ENCODE measurements at regions of chr10 and their contacts with region 1.

Region 1: GRCh38 chr10:29590915-29591650 is 43.7 kb downstream of the SVIL start:
- DNase-seq: no peak
- H3K4me3 Mint-ChIP-seq: peak overlapping the region; percentile 39
- H3K27ac Mint-ChIP-seq: peak overlapping the region; percentile 95
- H3K4me1 Mint-ChIP-seq: peaks cover 73% of the 10 kb centered on the region
- H3K27me3 Mint-ChIP-seq: no peaks in the 10 kb centered on the region
- CTCF ChIP-seq: no peak

Region 2: DNA sequence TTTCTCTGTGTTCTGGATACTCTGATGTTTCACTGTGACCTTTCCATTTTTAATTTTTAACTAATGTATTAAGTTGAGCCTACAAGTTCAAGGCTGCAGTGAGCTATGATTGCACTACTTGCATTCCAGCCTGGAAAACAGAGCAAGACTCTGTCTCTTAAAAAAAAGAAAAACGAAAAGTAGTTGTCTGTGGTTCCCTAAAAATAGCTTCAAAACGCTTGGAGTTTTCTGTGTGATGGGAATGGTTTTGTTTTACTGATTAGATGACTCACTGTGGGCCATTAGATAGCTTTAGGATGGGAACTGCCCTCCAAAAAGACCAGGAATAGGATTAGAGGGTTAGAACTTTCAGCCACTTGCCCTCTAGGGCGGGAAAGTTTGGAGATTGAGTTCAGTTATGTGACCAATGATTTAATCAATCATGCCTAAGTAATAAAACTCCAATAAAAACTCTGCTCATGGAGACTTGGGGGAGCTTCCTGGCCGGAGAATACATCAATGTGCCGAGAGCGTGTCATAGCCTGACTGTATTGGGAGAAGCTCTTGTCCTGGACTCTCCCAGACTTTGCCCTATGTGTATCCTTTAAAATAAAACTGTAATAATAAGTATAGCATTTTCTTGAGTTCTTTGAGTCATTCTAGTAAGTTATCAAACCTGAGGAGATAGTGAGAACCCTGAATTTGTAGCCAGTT is 155.1 kb before region 1 on chr10:
- CTCF ChIA-PET with region 1: no interaction called
- intact Hi-C with region 1: no loop called
- DNase-seq: no peak
- H3K4me3 Mint-ChIP-seq: no peak overlapping the region
- H3K27ac Mint-ChIP-seq: no peak overlapping the region
- H3K4me1 Mint-ChIP-seq: peaks cover 7% of the 10 kb centered on the region
- H3K27me3 Mint-ChIP-seq: no peaks in the 10 kb centered on the region
- CTCF ChIP-seq: no peak

Region 3: DNA sequence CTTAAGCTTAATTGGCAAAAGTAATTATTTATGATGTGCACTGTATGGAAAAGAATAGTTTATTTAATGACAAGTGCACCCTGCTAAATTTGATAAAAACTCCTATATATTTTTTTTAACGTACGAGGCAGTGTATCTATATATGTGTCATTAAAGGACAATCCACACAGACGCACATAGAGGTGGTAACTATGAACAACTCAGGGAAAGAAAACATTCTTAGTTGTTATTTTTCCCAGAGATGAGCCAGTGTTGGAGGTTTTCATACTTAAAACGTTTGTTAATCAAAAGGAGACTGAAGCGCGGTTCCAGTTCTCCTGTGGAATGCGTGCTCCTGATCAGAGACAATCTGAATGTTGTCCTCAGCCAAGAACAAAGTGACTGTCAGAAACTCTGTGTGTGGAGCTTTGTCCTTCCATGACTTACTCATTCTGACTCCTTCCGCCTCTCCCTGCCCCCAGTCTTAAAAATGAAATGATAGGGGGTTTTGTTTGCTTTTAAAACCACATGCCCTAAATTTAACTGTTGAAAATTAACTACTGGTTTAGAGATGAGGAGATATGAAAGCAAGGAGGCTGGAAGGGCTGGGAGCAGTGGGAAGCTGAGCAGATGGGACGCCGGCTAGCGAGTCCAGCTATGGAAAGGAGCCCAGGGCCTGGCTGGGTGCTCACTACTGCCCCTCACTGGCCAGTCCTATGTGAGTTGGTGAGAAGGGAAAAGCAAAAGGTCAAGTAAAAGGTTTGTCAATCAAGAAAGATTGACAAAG is 55.9 kb before region 1 on chr10:
- CTCF ChIA-PET with region 1: interaction called, 16 read pairs
- intact Hi-C with region 1: loop called (anchors 5 kb)
- DNase-seq: peak; percentile 93
- H3K4me3 Mint-ChIP-seq: peak overlapping the region; percentile 62
- H3K27ac Mint-ChIP-seq: peak overlapping the region; percentile 90
- H3K4me1 Mint-ChIP-seq: peaks cover 52% of the 10 kb centered on the region
- H3K27me3 Mint-ChIP-seq: no peaks in the 10 kb centered on the region
- CTCF ChIP-seq: peak; percentile 74

Region 4: DNA sequence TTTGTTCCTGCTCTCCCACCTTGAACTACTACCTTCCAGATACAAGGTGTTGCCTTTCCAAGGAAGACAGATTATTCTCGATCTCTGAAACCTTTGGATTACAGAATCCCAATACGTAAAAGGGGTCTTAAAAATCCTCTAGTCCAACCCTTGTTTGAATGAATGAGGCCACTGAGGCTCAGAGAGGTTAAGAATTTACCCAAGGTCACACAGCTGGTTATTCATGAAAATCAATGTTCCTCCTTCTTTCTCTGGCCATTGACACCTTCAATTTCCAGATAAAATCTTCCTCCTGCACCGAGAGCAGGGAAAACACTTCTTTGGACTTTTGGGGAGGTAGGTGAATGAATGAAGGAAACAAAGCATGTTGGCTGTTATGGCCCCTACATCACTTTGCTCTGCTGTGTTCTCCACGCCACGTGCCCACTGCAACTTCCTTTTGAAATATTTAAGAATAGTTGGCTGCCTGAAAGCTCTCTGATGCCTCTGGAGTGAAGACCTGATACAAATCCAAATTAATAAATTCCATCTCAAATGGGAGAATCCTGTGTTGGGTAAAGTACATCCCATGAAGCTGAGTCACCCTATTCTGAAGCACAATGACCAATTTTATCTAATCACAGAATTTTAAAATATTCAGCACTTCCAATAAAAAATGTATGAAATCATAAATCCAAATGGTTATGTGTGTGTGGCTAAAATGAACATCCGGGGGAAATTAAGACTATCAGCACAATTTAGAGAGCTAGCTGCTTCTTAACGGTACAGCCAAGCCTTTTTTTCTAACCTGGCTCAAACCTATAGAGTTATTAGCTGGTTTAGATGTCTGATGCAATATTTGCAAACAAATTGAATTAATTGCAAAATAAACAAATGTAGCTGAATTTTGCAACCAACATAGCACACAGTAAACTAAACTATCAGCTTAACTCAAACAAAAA is 36.4 kb after region 1 on chr10:
- CTCF ChIA-PET with region 1: no interaction called
- intact Hi-C with region 1: loop called (anchors 1 kb)
- DNase-seq: no peak
- H3K4me3 Mint-ChIP-seq: no peak overlapping the region
- H3K27ac Mint-ChIP-seq: peak overlapping the region; percentile 67
- H3K4me1 Mint-ChIP-seq: peaks cover 75% of the 10 kb centered on the region
- H3K27me3 Mint-ChIP-seq: no peaks in the 10 kb centered on the region
- CTCF ChIP-seq: no peak

Region 5: DNA sequence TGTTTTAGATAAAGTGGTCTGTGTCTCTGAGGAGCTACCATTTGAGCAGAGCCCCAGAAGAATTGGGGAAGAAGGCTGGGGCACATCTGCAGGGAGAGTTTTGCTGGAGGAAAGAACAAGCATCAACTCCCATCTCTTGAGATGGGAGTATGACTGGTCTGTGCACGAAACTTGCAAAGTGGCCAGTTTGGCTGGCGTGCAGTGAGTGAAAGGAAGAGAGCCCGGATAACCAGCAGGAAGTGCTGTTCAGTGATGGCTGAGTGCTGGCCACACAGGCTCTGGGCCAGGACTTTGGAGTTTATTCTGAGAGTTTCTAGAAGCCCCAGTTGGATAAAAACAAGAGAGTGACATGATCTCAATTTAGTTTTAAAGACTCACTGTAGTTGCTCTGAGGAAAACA is 78.1 kb after region 1 on chr10:
- CTCF ChIA-PET with region 1: no interaction called
- intact Hi-C with region 1: loop called (anchors 5 kb)
- DNase-seq: peak; percentile 31
- H3K4me3 Mint-ChIP-seq: peak overlapping the region; percentile 22
- H3K27ac Mint-ChIP-seq: peak overlapping the region; percentile 84
- H3K4me1 Mint-ChIP-seq: peaks cover 48% of the 10 kb centered on the region
- H3K27me3 Mint-ChIP-seq: no peaks in the 10 kb centered on the region
- CTCF ChIP-seq: no peak

Region 6: GRCh38 chr10:29804025-29804852 is 213.2 kb after region 1 on chr10:
- CTCF ChIA-PET with region 1: no interaction called
- intact Hi-C with region 1: loop called (anchors 1 kb)
- DNase-seq: peak; percentile 87
- H3K4me3 Mint-ChIP-seq: peak overlapping the region; percentile 33
- H3K27ac Mint-ChIP-seq: peak overlapping the region; percentile 90
- H3K4me1 Mint-ChIP-seq: peaks cover 54% of the 10 kb centered on the region
- H3K27me3 Mint-ChIP-seq: no peaks in the 10 kb centered on the region
- CTCF ChIP-seq: no peak

Region 7: GRCh38 chr10:29828440-29828894 is 237.4 kb after region 1 on chr10:
- CTCF ChIA-PET with region 1: no interaction called
- intact Hi-C with region 1: no loop called
- DNase-seq: no peak
- H3K4me3 Mint-ChIP-seq: no peak overlapping the region
- H3K27ac Mint-ChIP-seq: no peak overlapping the region
- H3K4me1 Mint-ChIP-seq: peaks cover 18% of the 10 kb centered on the region
- H3K27me3 Mint-ChIP-seq: no peaks in the 10 kb centered on the region
- CTCF ChIP-seq: no peak

Region 8: DNA sequence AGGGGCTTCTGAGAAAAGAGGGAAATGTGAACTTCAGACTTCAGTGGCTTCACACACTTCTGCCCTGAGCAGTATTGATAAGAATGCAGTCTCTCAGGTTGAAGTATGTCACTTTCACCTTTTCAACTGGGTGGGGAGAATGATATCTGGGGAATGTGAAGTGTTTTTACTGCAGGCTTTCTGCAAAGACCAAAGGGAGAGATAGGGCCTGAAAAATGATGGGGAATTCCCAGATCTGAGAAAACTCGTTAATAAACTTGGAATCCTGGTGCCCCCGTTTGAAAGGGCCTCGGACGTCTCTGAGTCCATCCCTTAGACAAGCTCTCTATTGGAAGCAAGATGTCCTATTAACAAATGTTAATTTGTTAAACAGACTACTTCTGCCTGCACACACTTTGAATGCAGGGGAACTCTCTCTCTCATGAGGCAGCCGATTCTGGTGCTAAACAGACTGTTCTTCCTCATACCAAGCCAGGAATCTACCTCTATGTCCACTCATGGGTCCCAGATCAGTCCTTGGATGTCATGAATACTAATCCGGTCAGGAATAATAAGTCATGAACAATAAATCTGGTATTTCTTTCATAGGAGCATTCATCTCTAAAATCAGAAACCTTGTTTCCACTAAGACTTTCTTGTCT is 274.7 kb after region 1 on chr10:
- CTCF ChIA-PET with region 1: no interaction called
- intact Hi-C with region 1: loop called (anchors 5 kb)
- DNase-seq: peak; percentile 66
- H3K4me3 Mint-ChIP-seq: peak overlapping the region; percentile 33
- H3K27ac Mint-ChIP-seq: peak overlapping the region; percentile 92
- H3K4me1 Mint-ChIP-seq: peaks cover 42% of the 10 kb centered on the region
- H3K27me3 Mint-ChIP-seq: no peaks in the 10 kb centered on the region
- CTCF ChIP-seq: no peak

Region 9: DNA sequence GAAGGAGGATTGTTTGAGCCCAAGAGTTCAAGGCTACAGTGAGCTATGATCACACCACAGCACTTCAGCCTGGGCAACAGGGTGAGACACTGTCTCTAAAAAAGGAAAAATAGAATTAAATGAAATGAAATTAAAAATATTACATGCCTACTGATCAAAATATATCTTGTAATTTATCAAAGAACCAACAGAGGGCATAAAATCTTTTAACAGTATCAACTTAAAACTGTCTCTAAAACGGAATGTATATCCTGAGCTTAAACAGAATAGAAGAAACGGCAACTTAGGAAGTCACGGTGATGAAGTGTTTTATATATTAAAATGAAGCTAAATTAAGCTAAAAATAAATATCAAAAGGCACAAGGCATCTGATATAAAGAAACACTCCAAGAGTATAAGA is 679.2 kb after region 1 on chr10:
- CTCF ChIA-PET with region 1: no interaction called
- intact Hi-C with region 1: no loop called
- DNase-seq: no peak
- H3K4me3 Mint-ChIP-seq: no peak overlapping the region
- H3K27ac Mint-ChIP-seq: no peak overlapping the region
- H3K4me1 Mint-ChIP-seq: no peaks in the 10 kb centered on the region
- H3K27me3 Mint-ChIP-seq: peaks cover 57% of the 10 kb centered on the region
- CTCF ChIP-seq: no peak